ENCODE measurements at regions of chr6 and their contacts with region 1.

Region 1: DNA sequence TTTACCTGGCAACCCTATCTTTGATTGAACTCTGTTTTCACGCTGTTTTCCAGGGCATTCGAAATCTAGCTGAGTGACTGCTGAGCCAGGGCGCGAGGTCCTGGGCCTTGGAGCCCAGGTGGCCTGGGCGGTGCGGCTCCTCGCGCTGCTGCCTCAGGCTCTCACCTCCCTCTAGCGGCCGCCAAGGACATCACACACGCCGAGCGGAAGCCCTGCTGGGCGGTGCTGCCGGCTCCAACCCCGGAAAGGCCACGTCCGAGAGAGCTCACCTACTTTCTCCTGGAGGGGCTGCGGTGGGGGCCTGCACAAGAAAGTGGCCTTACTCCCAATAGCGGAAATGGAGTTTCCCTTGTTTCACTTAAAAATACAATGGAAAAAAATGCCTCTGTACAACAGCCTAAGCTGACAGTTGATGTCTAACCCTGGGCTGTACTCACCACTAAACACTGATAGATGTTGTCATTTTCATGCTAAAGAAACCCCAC is 77.7 kb downstream of the ELOVL4 start:
- DNase-seq: peak; percentile 91
- ATAC-seq: peak; percentile 100
- H3K4me3 Mint-ChIP-seq: peak overlapping the region; percentile 42
- H3K27ac Mint-ChIP-seq: peak overlapping the region; percentile 23
- H3K4me1 Mint-ChIP-seq: peaks cover 8% of the 10 kb centered on the region
- H3K27me3 Mint-ChIP-seq: peaks cover 7% of the 10 kb centered on the region

Region 2: DNA sequence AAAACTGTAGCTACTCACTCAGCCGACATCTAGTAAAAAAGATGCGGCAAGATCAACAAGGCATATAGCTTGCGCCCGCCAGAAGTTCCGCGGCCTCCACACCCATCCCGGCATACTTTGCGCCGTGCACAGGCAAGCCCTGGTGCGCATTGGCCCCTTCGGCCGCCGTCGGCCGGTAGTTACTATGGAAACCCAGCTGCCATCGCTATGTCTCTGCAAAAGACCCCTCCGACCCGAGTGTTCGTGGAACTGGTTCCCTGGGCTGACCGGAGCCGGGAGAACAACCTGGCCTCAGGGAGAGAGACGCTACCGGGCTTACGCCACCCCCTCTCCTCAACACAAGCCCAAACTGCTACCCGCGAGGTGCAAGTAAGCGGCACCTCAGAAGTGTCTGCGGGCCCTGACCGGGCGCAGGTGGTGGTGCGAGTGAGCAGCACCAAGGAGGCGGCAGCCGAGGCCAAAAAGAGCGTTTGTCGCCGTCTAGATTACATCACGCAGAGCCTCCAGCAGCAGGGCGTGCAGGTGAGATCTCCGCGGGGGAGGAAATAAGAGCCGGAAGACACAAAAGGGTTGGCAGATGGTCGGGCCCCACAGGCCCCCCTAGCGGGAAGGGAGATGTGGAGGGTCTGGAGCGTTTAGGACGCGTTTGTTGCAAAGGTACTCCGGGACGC is 1002.1 kb before region 1 on chr6 and contains the start of gene IRAK1BP1:
- CTCF ChIA-PET with region 1: no interaction called
- POLR2A ChIA-PET with region 1: no interaction called
- intact Hi-C with region 1: loop called in 1 of 2 experiments (anchors 10 kb)
- DNase-seq: peak; percentile 93
- ATAC-seq: peak; percentile 99
- H3K4me3 Mint-ChIP-seq: peak within 1 kb of the TSS; percentile 92
- H3K27ac Mint-ChIP-seq: peak within 1 kb of the TSS; percentile 79
- H3K4me1 Mint-ChIP-seq: peaks cover 15% of the 10 kb centered on the region
- H3K27me3 Mint-ChIP-seq: no peaks in the 10 kb centered on the region
- total RNA-seq, gene IRAK1BP1: 1.6 to 2.7 TPM

Region 3: GRCh38 chr6:79570129-79571029 is 299.3 kb before region 1 on chr6:
- CTCF ChIA-PET with region 1: interaction called, 4 read pairs
- POLR2A ChIA-PET with region 1: no interaction called
- intact Hi-C with region 1: loop called (anchors 1 to 10 kb)
- DNase-seq: no peak
- ATAC-seq: no peak
- H3K4me3 Mint-ChIP-seq: no peak overlapping the region
- H3K27ac Mint-ChIP-seq: no peak overlapping the region
- H3K4me1 Mint-ChIP-seq: no peaks in the 10 kb centered on the region
- H3K27me3 Mint-ChIP-seq: no peaks in the 10 kb centered on the region

Region 4: GRCh38 chr6:79777713-79778579 is 91.7 kb before region 1 on chr6:
- CTCF ChIA-PET with region 1: interaction called, 10 read pairs
- POLR2A ChIA-PET with region 1: no interaction called
- intact Hi-C with region 1: loop called (anchors 1 kb)
- DNase-seq: peak; percentile 93
- ATAC-seq: peak; percentile 88
- H3K4me3 Mint-ChIP-seq: peak overlapping the region; percentile 63
- H3K27ac Mint-ChIP-seq: peak overlapping the region; percentile 62
- H3K4me1 Mint-ChIP-seq: peaks cover 7% of the 10 kb centered on the region
- H3K27me3 Mint-ChIP-seq: peaks cover 4% of the 10 kb centered on the region

Region 5: DNA sequence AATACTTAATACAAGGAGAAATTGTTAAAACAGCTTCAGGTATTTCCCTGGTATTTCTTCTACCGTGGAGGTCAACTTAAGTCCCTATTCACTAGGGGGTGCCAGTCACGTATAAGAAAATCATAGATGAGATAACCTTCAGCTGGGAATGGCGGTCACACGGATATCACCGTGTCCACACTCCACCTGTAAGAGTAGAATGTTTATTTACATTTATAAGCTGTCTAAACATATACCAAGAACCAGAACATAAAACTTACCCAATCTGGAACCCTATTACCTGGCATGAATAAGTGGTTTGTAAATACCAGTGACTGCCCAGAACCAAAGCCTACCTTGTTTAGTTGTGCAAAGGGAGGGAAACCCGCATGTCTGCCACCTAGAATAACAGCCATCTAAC is 79.6 kb after region 1 on chr6:
- CTCF ChIA-PET with region 1: interaction called, 17 read pairs
- POLR2A ChIA-PET with region 1: no interaction called
- intact Hi-C with region 1: loop called in 1 of 2 experiments (anchors 2 kb)
- DNase-seq: peak; percentile 83
- ATAC-seq: peak; percentile 33
- H3K4me3 Mint-ChIP-seq: no peak overlapping the region
- H3K27ac Mint-ChIP-seq: no peak overlapping the region
- H3K4me1 Mint-ChIP-seq: peaks cover 29% of the 10 kb centered on the region
- H3K27me3 Mint-ChIP-seq: peaks cover 22% of the 10 kb centered on the region

Region 6: GRCh38 chr6:80094017-80094416 is 224.4 kb after region 1 on chr6:
- CTCF ChIA-PET with region 1: interaction called, 4 read pairs
- POLR2A ChIA-PET with region 1: no interaction called
- intact Hi-C with region 1: loop called in 1 of 2 experiments (anchors 2 kb)
- DNase-seq: peak; percentile 23
- ATAC-seq: no peak
- H3K4me3 Mint-ChIP-seq: no peak overlapping the region
- H3K27ac Mint-ChIP-seq: no peak overlapping the region
- H3K4me1 Mint-ChIP-seq: peaks cover 2% of the 10 kb centered on the region
- H3K27me3 Mint-ChIP-seq: peaks cover 2% of the 10 kb centered on the region

Region 7: GRCh38 chr6:81366972-81367371 is 1497.3 kb after region 1 on chr6:
- CTCF ChIA-PET with region 1: no interaction called
- POLR2A ChIA-PET with region 1: no interaction called
- intact Hi-C with region 1: no loop called
- DNase-seq: no peak
- ATAC-seq: no peak
- H3K4me3 Mint-ChIP-seq: no peak overlapping the region
- H3K27ac Mint-ChIP-seq: no peak overlapping the region
- H3K4me1 Mint-ChIP-seq: no peaks in the 10 kb centered on the region
- H3K27me3 Mint-ChIP-seq: no peaks in the 10 kb centered on the region

Measured in activated CD4-positive, alpha-beta T cell treated with anti-CD3 and anti-CD28 coated beads for 36 hours (primary cell).